H1 (cell line): ENCODE measurements at regions of chr3 and their contacts with region 1.

Region 1: GRCh38 chr3:192816351-192816750 is 89.0 kb upstream of the FGF12 start:
- DNase-seq: no peak
- H3K4me3 ChIP-seq: no peak overlapping the region
- H3K27ac ChIP-seq: no peak overlapping the region
- H3K4me1 ChIP-seq: peaks cover 2 to 9% (median 3%) of the 10 kb centered on the region in 4 experiments; a peak in 5 of 7 replicates
- H3K27me3 ChIP-seq: no peaks in the 10 kb centered on the region
- CTCF ChIP-seq: peak in 2 of 3 experiments; percentile 49 to 60; a peak in 3 of 4 replicates
- EP300 ChIP-seq: no peak
- POLR2A ChIP-seq: no peak
- RAD21 ChIP-seq: peak; percentile 84 to 87

Region 2: GRCh38 chr3:192715126-192715525 is 101.2 kb before region 1 on chr3:
- CTCF ChIA-PET with region 1: no interaction called
- POLR2A ChIA-PET with region 1: no interaction called
- DNase-seq: no peak
- H3K4me3 ChIP-seq: no peak overlapping the region
- H3K27ac ChIP-seq: no peak overlapping the region
- H3K4me1 ChIP-seq: peaks cover 0 to 11% (median 2%) of the 10 kb centered on the region in 4 experiments; a peak in 2 of 7 replicates
- H3K27me3 ChIP-seq: no peaks in the 10 kb centered on the region
- CTCF ChIP-seq: no peak
- EP300 ChIP-seq: no peak
- POLR2A ChIP-seq: no peak
- RAD21 ChIP-seq: no peak

Region 3: DNA sequence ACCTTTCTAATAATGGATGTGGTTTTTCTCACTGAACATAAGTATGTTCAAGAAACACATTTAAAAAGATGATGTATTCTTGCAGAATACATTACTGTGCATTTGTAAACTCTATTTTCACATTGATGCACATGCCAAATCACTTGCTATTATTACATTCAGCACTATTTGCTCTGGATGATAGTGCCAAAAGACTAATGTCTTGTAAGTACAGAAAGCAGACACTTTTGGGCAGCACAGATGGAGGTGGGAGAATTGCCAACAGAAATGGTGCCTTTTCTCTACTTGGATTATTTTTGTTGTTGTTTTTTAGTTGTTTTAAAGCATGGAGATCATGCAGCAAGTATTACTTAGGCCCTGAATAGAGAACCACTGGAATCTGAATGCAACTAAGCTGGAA is 78.8 kb before region 1 on chr3:
- CTCF ChIA-PET with region 1: no interaction called
- POLR2A ChIA-PET with region 1: no interaction called
- DNase-seq: no peak
- H3K4me3 ChIP-seq: no peak overlapping the region
- H3K27ac ChIP-seq: no peak overlapping the region
- H3K4me1 ChIP-seq: no peaks in the 10 kb centered on the region
- H3K27me3 ChIP-seq: no peaks in the 10 kb centered on the region
- CTCF ChIP-seq: no peak
- EP300 ChIP-seq: no peak
- POLR2A ChIP-seq: no peak
- RAD21 ChIP-seq: no peak

Region 4: DNA sequence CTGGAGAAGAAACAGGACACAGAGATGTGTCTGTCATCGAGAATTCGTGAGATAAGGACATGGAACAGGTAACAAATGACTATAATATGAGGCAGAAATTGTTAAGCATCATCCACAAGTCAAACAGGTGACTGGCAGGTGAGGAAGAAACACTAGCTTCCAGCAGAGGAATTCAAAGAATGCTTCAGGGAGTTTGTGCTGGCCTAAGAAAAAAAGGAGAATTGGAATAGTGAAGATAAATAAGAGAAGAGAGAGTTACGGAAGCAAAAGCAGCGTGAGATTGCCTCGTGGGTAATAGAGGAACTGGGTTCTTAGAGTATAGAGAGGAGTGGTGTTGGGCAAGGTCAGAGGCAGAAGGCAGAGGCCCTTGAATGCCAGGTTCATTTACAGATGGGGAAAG is 66.2 kb before region 1 on chr3:
- CTCF ChIA-PET with region 1: no interaction called
- POLR2A ChIA-PET with region 1: no interaction called
- DNase-seq: no peak
- H3K4me3 ChIP-seq: no peak overlapping the region
- H3K27ac ChIP-seq: no peak overlapping the region
- H3K4me1 ChIP-seq: peaks cover 2 to 23% (median 20%) of the 10 kb centered on the region in 4 experiments
- H3K27me3 ChIP-seq: no peaks in the 10 kb centered on the region
- CTCF ChIP-seq: no peak
- EP300 ChIP-seq: no peak
- POLR2A ChIP-seq: no peak
- RAD21 ChIP-seq: no peak

Region 5: GRCh38 chr3:192833177-192833821 is 16.9 kb after region 1 on chr3:
- CTCF ChIA-PET with region 1: interaction called, 12 read pairs
- POLR2A ChIA-PET with region 1: no interaction called
- DNase-seq: no peak
- H3K4me3 ChIP-seq: no peak overlapping the region
- H3K27ac ChIP-seq: no peak overlapping the region
- H3K4me1 ChIP-seq: peaks cover 0 to 7% (median 3%) of the 10 kb centered on the region in 4 experiments; a peak in 2 of 7 replicates
- H3K27me3 ChIP-seq: no peaks in the 10 kb centered on the region
- CTCF ChIP-seq: no peak
- EP300 ChIP-seq: no peak
- POLR2A ChIP-seq: no peak
- RAD21 ChIP-seq: no peak

Region 6: GRCh38 chr3:193016437-193016901 is 200.1 kb after region 1 on chr3:
- CTCF ChIA-PET with region 1: interaction called, 10 read pairs
- POLR2A ChIA-PET with region 1: interaction called, 3 read pairs
- DNase-seq: peak in 1 of 2 experiments; percentile 54
- H3K4me3 ChIP-seq: peak overlapping the region in 1 of 4 experiments; percentile 30; a peak in 1 of 8 replicates
- H3K27ac ChIP-seq: no peak overlapping the region
- H3K4me1 ChIP-seq: peaks cover 0 to 6% (median 3%) of the 10 kb centered on the region in 4 experiments; a peak in 4 of 7 replicates
- H3K27me3 ChIP-seq: no peaks in the 10 kb centered on the region
- CTCF ChIP-seq: no peak
- EP300 ChIP-seq: no peak
- POLR2A ChIP-seq: no peak
- RAD21 ChIP-seq: no peak

Region 7: DNA sequence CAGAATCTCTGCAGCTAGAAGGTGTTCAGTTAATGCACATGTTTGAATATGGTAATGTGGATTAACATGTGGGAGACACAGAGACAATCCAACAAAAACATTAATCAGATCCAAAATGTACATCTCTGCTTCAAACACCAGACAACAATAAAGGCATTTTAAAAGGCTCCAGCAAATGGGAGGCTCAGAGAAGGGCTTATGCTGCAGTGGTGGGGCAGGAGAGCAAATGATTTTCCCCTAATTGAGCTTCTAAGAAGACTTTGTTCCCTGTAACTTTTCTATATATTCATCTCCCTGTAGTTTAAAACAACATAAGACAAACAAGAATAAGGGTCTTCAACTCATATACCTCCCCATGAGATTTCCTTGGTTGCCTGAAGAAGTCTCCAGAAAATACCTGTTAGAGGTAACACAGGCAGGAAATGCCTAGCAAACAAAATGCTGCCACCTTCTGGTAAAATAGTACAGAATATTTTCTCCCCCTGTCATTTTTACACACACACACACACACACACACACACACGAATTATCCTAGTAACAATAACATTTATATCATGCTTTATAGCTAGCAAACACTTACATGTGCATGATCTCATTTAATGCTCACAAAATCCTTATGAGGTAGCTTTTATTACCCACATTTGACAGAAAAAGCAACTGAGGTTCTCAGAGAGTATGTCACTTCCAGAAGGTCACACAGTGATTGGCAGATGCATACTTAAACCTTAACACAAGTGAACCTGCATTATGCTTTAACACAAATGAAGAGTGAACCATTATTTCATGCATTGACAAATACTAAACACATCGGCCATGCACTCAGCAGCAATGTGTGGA is 224.7 kb after region 1 on chr3:
- CTCF ChIA-PET with region 1: interaction called, 312 read pairs
- POLR2A ChIA-PET with region 1: no interaction called
- DNase-seq: no peak
- H3K4me3 ChIP-seq: no peak overlapping the region
- H3K27ac ChIP-seq: no peak overlapping the region
- H3K4me1 ChIP-seq: no peaks in the 10 kb centered on the region
- H3K27me3 ChIP-seq: no peaks in the 10 kb centered on the region
- CTCF ChIP-seq: peak in 2 of 3 experiments; percentile 45 to 54; a peak in 2 of 4 replicates
- EP300 ChIP-seq: no peak
- POLR2A ChIP-seq: no peak
- RAD21 ChIP-seq: peak; percentile 82 to 83

Region 8: DNA sequence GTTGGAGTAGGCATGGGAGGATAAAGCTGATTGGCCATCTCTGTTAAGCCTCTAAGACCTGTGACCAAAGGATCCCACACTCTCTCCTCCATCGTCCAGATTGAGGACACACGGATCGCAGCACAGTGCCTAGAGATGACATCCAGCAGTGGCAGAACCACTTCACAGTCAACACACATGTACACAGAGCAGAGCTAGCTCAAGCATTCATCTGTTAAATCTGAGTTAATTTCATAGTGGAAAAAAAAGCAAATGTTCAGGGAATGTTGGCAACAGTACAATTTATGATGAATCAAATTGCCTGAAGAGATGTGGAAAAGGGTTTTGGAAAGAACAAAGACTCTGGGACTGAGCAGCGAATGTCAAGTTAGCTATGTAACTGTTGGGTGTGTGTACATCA is 316.6 kb after region 1 on chr3:
- CTCF ChIA-PET with region 1: interaction called, 120 read pairs
- POLR2A ChIA-PET with region 1: no interaction called
- DNase-seq: no peak
- H3K4me3 ChIP-seq: no peak overlapping the region
- H3K27ac ChIP-seq: no peak overlapping the region
- H3K4me1 ChIP-seq: peaks cover 0 to 6% (median 0%) of the 10 kb centered on the region in 4 experiments; a peak in 1 of 7 replicates
- H3K27me3 ChIP-seq: no peaks in the 10 kb centered on the region
- CTCF ChIP-seq: no peak
- EP300 ChIP-seq: no peak
- POLR2A ChIP-seq: no peak
- RAD21 ChIP-seq: no peak